ENCODE measurements at regions of chrX and their contacts with region 1.

Region 1: DNA sequence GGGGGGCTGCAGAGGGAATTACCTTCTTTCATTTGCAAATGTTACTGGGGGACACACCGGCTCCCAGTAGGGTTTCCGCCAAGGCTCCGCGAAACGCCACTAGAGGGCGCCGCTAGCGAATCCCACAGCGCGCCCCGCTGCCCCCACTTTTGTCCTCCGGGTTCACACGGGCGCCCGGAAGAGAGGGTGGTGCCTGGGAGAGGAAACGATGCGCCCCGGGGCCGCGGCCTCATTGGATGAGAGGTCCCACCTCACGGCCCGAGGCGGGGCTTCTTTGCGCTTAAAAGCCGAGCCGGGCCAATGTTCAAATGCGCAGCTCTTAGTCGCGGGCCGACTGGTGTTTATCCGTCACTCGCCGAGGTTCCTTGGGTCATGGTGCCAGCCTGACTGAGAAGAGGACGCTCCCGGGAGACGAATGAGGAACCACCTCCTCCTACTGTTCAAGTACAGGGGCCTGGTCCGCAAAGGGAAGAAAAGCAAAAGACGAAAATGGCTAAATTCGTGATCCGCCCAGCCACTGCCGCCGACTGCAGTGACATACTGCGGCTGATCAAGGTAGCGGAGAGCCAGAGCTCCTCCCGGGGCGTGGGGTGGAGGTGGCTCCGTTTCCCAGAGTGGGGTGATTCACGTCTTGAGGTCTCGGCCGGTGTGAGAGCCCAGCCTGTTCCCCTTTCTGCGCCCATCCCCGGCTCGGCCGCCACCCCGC is at the start of gene SAT1:
- DNase-seq: peak; percentile 90 to 94 (median 93)
- H3K4me3 ChIP-seq: peak within 1 kb of the TSS; percentile 78 to 80
- H3K4me3 Mint-ChIP-seq: peak within 1 kb of the TSS; percentile 88 to 98 (median 96)
- H3K27ac ChIP-seq: peak within 1 kb of the TSS; percentile 88
- H3K27ac Mint-ChIP-seq: peak within 1 kb of the TSS; percentile 96 to 99 (median 98)
- H3K4me1 ChIP-seq: peaks cover 34% of the 10 kb centered on the region
- H3K4me1 Mint-ChIP-seq: peaks cover 13 to 45% (median 29%) of the 10 kb centered on the region in 4 donors
- H3K27me3 ChIP-seq: no peaks in the 10 kb centered on the region
- H3K27me3 Mint-ChIP-seq: no peaks in the 10 kb centered on the region
- total RNA-seq, gene SAT1: 139 to 145 TPM

Region 2: DNA sequence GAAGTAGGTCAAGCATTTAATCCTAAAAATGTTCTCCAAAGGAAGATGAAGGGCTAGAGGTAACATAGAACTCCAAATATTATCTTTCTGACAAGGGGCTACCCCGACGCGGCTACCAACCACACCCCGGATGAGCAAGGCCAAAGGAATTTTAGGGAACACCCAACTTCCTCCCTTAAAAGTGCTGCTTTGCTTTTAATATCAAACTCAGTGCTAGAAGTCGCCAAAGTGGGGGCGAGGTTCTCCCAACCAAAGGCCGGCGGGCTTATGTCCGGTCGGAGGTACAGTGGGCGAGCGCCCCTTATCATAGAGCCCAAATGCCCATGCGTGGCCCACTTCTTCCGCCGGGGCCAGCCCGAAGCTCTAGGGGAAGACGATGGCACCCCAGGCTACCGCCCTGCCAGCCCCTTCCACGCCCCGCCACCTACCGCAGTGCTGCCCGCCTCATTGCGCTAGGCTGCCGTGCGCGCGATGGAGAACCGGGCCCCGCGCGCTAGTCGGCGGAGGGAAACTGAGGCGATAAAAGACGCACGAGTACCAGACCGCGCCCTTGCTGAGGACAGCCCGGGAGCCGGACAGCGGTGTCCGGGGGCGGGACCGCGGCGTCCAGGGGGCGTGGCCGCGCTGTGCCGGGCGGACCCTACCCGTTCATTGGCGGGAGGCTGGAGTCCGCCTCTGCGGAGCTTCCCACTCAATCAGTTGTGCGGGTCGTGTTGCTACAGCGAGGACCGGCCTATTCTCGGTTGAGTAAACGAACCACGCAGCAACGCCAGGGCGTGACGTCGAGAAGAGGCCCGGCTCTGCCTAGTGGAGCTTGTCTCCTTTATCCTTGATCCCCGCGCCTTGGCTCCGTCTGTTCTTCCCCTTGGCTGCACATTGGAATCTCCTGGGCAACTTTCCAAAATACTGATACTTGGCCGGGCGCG is 40.1 kb before region 1 on chrX and contains the start of gene ACOT9:
- CTCF ChIA-PET with region 1: interaction called, 16 read pairs
- POLR2A ChIA-PET with region 1: interaction called, 63 read pairs
- intact Hi-C with region 1: loop called (anchors 1 kb)
- DNase-seq: peak; percentile 69 to 80 (median 76)
- H3K4me3 ChIP-seq: peak within 1 kb of the TSS; percentile 45 to 77
- H3K4me3 Mint-ChIP-seq: peak within 1 kb of the TSS; percentile 87 to 94 (median 90)
- H3K27ac ChIP-seq: peak within 1 kb of the TSS; percentile 58
- H3K27ac Mint-ChIP-seq: peak within 1 kb of the TSS; percentile 64 to 96 (median 91)
- H3K4me1 ChIP-seq: peaks cover 35% of the 10 kb centered on the region
- H3K4me1 Mint-ChIP-seq: peaks cover 11 to 42% (median 28%) of the 10 kb centered on the region in 4 donors
- H3K27me3 ChIP-seq: no peaks in the 10 kb centered on the region
- H3K27me3 Mint-ChIP-seq: no peaks in the 10 kb centered on the region
- total RNA-seq, gene ACOT9: 21.2 to 25.2 TPM

Region 3: DNA sequence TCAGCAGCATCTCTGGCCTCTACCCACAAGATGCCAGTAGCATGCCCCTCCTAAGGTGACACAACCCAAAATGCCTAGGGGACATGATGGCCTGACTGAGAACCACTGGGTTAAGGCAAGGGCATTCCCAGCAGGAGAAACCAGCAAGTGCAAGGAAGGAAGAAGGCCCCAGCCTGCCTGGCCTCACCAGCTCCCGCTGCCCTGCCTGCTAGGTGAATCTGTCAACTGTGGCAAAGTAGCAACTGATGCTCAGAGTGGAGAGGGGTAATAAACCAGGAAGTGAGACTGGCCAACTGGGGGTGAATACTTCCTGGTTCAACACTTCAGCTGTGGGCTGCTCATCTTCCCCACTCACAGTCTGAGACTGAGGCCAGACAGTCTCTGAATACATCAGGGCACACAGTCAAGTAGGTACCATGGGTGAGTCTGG is 34.2 kb after region 1 on chrX:
- CTCF ChIA-PET with region 1: no interaction called
- POLR2A ChIA-PET with region 1: no interaction called
- intact Hi-C with region 1: no loop called
- DNase-seq: no peak
- H3K4me3 ChIP-seq: no peak overlapping the region
- H3K4me3 Mint-ChIP-seq: no peak overlapping the region
- H3K27ac ChIP-seq: no peak overlapping the region
- H3K27ac Mint-ChIP-seq: no peak overlapping the region
- H3K4me1 ChIP-seq: no peaks in the 10 kb centered on the region
- H3K4me1 Mint-ChIP-seq: no peaks in the 10 kb centered on the region
- H3K27me3 ChIP-seq: no peaks in the 10 kb centered on the region
- H3K27me3 Mint-ChIP-seq: no peaks in the 10 kb centered on the region

Region 4: DNA sequence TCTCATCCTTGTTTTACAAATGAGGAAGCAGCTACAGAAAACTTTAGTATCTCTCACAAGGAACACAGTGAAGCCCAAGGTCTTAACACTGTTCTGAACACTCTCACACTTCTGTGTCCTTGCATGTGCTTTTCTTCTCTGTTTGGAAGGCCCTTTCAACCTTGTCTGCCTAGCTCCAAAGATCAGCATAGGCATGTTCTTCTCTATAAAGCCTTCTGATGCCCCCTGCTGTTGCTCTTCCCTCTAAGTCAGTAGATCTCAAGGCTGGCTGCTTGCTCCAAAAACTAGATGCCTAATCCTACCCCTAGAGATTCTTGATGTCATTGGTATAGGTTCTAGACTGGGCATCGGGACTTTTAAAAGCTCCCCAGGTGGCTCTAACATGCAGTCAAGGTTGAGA is 118.8 kb after region 1 on chrX:
- CTCF ChIA-PET with region 1: interaction called, 23 read pairs
- POLR2A ChIA-PET with region 1: interaction called, 36 read pairs
- intact Hi-C with region 1: loop called (anchors 1 kb)
- DNase-seq: peak in 4 of 5 donors; percentile 26 to 51 (median 44)
- H3K4me3 ChIP-seq: no peak overlapping the region
- H3K4me3 Mint-ChIP-seq: no peak overlapping the region
- H3K27ac ChIP-seq: no peak overlapping the region
- H3K27ac Mint-ChIP-seq: no peak overlapping the region
- H3K4me1 ChIP-seq: peaks cover 21% of the 10 kb centered on the region
- H3K4me1 Mint-ChIP-seq: peaks cover 2 to 9% (median 5%) of the 10 kb centered on the region in 4 donors
- H3K27me3 ChIP-seq: no peaks in the 10 kb centered on the region
- H3K27me3 Mint-ChIP-seq: no peaks in the 10 kb centered on the region

Region 5: DNA sequence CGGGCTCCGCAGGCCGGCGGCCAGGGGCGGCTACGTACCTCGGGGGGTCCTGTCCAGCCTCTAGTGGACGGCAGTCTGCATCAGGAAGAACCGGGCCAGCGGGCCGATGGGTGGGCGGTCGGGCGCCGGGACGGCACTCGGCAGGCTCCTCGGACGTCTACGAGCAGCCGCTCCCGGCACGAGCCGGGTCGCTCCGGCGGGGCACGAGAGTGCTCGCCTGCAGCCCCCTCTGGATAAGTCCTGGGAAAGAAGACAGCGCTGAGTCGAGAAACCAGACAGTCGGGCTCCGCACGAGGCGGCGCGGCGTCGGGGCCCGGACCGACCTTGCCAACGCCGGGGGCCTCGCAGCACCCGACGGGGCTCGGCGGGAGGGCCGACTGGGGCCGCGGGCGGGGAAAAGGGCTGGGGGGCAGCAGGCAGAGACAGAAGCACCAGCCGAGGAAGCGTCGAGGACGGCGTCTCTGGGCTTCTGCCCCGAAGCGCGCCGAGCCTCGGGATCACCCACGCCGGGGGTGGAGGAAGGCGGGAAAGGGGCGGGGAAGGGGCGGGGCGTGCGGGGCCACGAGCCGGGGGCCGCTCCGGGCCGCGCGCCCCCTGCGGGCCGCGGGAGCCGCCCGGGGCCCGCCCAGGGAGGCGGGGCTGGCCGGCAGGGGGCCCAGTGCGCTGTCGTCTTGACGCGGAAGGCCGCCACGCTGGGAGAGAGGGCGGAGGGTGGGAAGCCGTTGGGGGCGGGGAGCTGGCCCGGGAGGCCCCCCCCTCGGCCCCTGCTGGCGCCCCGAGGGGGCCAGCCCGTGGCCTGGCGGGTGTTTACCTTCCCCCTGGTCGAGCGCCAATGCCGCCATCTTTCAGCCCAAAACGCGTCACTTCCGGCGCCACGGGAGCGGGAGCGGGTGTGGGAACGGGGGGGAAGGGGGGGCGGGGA is 242.1 kb after region 1 on chrX:
- CTCF ChIA-PET with region 1: no interaction called
- POLR2A ChIA-PET with region 1: interaction called, 22 read pairs
- intact Hi-C with region 1: no loop called
- DNase-seq: peak; percentile 77 to 82 (median 80)
- H3K4me3 ChIP-seq: peak overlapping the region; percentile 61 to 62
- H3K4me3 Mint-ChIP-seq: peak overlapping the region; percentile 62 to 94 (median 88)
- H3K27ac ChIP-seq: peak overlapping the region; percentile 75
- H3K27ac Mint-ChIP-seq: peak overlapping the region in 5 of 7 donors; percentile 59 to 92 (median 75)
- H3K4me1 ChIP-seq: peaks cover 29% of the 10 kb centered on the region
- H3K4me1 Mint-ChIP-seq: peaks cover 14 to 29% (median 22%) of the 10 kb centered on the region in 4 donors
- H3K27me3 ChIP-seq: no peaks in the 10 kb centered on the region
- H3K27me3 Mint-ChIP-seq: no peaks in the 10 kb centered on the region